Heart right ventricle (tissue), 16 donors: ENCODE measurements at regions of chr12 and their contacts with region 1.

Region 1: GRCh38 chr12:19129486-19130223 is at the start of gene PLEKHA5:
- DNase-seq: peak; percentile 68 to 82
- ATAC-seq: peak; percentile 73 to 94 (median 90)
- H3K4me3 ChIP-seq: peak within 1 kb of the TSS; percentile 82 to 98 (median 93)
- H3K27ac ChIP-seq: peak within 1 kb of the TSS; percentile 86 to 97 (median 94)
- H3K4me1 ChIP-seq: peaks cover 0 to 21% (median 6%) of the 10 kb centered on the region in 9 donors
- H3K27me3 ChIP-seq: no peaks in the 10 kb centered on the region
- CTCF ChIP-seq: peak in 6 of 9 donors; percentile 13 to 52 (median 32)
- total RNA-seq, gene PLEKHA5: 38.8 to 77.1 (median 65.7) TPM

Region 2: DNA sequence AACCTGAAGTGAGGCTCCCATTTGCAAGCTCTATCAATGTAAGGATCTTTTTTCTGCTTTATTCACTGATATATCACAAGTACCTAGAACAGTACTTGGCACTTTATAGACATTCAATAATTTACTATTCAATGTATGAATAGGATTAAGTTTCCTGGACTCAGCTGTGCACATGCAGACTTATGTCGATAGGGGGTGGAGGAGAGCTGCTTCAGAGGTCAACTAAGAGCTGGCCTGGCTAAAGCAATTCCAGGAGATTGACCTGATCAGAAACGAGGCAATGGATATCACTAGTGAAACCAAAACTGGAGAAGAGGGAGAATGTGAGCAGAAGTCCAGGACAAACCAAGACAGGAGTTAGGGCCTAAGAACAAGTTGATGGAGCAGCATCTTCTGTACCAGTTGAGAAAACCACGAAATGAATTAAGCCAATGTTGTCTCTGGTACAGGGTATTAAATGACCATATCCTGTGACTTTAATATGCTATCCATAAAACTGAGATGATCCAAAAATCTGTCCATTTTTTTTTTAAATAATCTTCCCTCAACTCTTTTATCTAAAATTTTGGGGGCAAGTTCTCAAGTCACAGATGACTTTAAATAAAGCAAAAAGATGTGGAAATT is 699.1 kb before region 1 on chr12:
- intact Hi-C with region 1: loop called in 1 of 10 experiments (anchors 10 kb)
- DNase-seq: peak in 1 of 2 donors; percentile 37
- ATAC-seq: peak; percentile 73 to 94 (median 88)
- H3K4me3 ChIP-seq: no peak overlapping the region
- H3K27ac ChIP-seq: no peak overlapping the region
- H3K4me1 ChIP-seq: peaks cover 0 to 25% (median 0%) of the 10 kb centered on the region in 9 donors
- H3K27me3 ChIP-seq: no peaks in the 10 kb centered on the region
- CTCF ChIP-seq: peak; percentile 42 to 89 (median 80)

Region 3: DNA sequence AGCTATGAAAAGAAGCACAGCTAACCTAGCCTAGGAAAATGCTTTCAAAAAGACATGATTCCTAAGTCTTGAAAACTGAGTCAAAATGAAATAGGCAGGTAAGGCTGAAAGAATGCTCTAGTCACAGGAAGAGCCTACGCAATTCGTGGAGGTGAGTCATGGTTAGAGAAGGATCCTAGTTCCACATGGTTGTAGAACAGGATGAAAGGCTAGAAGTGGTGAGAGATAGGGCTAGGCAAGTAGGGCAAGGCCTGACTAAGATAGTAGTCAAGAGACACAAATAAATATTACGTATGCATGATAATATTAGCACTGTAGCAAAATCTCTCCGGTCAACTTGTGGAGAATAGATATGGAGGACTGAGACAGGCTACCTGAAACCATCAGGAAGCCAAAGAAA is 439.0 kb before region 1 on chr12:
- intact Hi-C with region 1: no loop called
- DNase-seq: no peak
- ATAC-seq: peak; percentile 46 to 98 (median 90)
- H3K4me3 ChIP-seq: no peak overlapping the region
- H3K27ac ChIP-seq: peak overlapping the region in 2 of 10 donors; percentile 37 to 49
- H3K4me1 ChIP-seq: peaks cover 0 to 9% (median 0%) of the 10 kb centered on the region in 9 donors
- H3K27me3 ChIP-seq: no peaks in the 10 kb centered on the region
- CTCF ChIP-seq: no peak

Region 4: DNA sequence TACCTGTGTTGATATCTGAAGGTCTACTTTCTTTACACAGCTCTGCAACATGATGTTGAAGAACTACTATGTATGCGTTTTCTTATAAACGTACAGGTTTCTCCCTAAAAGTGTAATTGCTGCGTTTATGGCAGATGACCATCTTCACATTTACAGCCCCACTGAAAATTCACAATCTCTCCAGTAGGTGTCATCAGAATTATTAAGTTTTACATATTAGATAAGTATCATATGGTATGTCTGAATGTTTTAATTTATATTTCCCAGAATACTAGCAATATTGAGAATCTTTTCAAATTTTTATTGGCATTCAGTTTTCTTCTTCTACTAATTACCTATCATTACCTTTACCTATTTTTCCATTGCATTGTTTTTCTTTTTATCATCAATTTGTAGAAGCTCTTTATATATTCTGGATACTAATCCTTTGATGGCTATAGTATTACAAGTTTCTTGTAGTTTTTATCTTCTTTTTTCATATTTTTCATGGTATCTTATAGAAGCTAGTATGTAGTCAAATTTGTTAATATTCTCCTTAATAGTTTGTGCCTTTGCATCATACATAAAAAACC is 268.3 kb before region 1 on chr12:
- intact Hi-C with region 1: loop called in 1 of 10 experiments (anchors 5 kb)
- DNase-seq: no peak
- ATAC-seq: no peak
- H3K4me3 ChIP-seq: no peak overlapping the region
- H3K27ac ChIP-seq: no peak overlapping the region
- H3K4me1 ChIP-seq: peaks cover 0 to 10% (median 0%) of the 10 kb centered on the region in 9 donors
- H3K27me3 ChIP-seq: no peaks in the 10 kb centered on the region
- CTCF ChIP-seq: peak in 8 of 9 donors; percentile 19 to 61 (median 50)

Region 5: GRCh38 chr12:18919871-18920511 is 209.7 kb before region 1 on chr12:
- intact Hi-C with region 1: no loop called
- DNase-seq: no peak
- ATAC-seq: no peak
- H3K4me3 ChIP-seq: no peak overlapping the region
- H3K27ac ChIP-seq: no peak overlapping the region
- H3K4me1 ChIP-seq: no peaks in the 10 kb centered on the region
- H3K27me3 ChIP-seq: no peaks in the 10 kb centered on the region
- CTCF ChIP-seq: no peak

Region 6: GRCh38 chr12:19031032-19031431 is 98.6 kb before region 1 on chr12:
- intact Hi-C with region 1: loop called in 2 of 10 experiments (anchors 5 kb)
- DNase-seq: no peak
- ATAC-seq: peak in 5 of 8 donors; percentile 30 to 59 (median 50)
- H3K4me3 ChIP-seq: no peak overlapping the region
- H3K27ac ChIP-seq: no peak overlapping the region
- H3K4me1 ChIP-seq: peaks cover 0 to 14% (median 4%) of the 10 kb centered on the region in 9 donors
- H3K27me3 ChIP-seq: no peaks in the 10 kb centered on the region
- CTCF ChIP-seq: no peak

Region 7: DNA sequence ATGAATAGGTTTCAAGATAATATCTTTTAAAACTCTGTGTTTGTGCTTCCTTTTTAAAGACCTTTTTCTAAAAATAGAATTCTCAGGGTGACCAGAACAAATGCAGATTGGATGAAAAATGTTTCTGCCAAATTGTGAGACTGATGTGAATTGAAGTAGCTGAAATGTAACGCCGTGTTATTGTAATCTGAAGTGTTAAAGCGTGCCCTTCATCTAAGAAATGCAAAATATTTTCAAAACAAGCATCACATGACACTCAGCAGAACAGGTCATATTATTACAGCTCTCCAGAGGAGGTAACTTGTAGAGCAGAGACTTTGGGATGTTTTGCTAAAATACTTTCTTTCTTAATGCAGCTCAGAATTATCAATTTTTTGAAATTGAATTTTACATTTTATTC is 90.1 kb before region 1 on chr12:
- intact Hi-C with region 1: loop called in 5 of 10 experiments (anchors 2 to 10 kb)
- DNase-seq: no peak
- ATAC-seq: peak in 4 of 8 donors; percentile 36 to 70 (median 48)
- H3K4me3 ChIP-seq: peak overlapping the region in 8 of 10 donors; percentile 15 to 41 (median 26)
- H3K27ac ChIP-seq: peak overlapping the region; percentile 13 to 83 (median 73)
- H3K4me1 ChIP-seq: peaks cover 0 to 51% (median 28%) of the 10 kb centered on the region in 9 donors
- H3K27me3 ChIP-seq: no peaks in the 10 kb centered on the region
- CTCF ChIP-seq: no peak

Region 8: DNA sequence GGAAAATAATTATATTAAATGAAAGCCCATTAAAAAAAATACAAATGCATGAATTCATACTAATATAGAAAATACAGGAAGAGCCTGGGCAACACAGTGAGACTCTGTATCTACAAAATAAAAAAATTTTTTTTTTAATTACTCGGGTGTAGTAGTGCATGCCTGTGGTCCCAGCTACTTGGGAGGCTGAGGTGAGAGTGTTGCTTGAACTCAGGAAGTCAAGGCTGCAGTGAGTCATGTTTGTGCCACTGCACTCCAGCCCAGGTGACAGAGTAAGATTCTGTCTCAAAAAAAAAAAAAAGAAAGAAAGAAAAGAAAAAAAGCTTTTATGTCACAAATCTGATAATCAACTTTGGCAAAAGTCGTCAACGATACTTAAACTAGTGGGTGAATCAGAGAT is 80.7 kb before region 1 on chr12:
- intact Hi-C with region 1: loop called in 2 of 10 experiments (anchors 5 to 10 kb)
- DNase-seq: no peak
- ATAC-seq: no peak
- H3K4me3 ChIP-seq: no peak overlapping the region
- H3K27ac ChIP-seq: no peak overlapping the region
- H3K4me1 ChIP-seq: no peaks in the 10 kb centered on the region
- H3K27me3 ChIP-seq: no peaks in the 10 kb centered on the region
- CTCF ChIP-seq: no peak

Region 9: GRCh38 chr12:19181666-19182426 is 52.2 kb after region 1 on chr12:
- intact Hi-C with region 1: loop called in 4 of 10 experiments (anchors 5 kb)
- DNase-seq: no peak
- ATAC-seq: no peak
- H3K4me3 ChIP-seq: no peak overlapping the region
- H3K27ac ChIP-seq: peak overlapping the region in 6 of 10 donors; percentile 4 to 57 (median 34)
- H3K4me1 ChIP-seq: peaks cover 2 to 64% (median 28%) of the 10 kb centered on the region in 9 donors
- H3K27me3 ChIP-seq: no peaks in the 10 kb centered on the region
- CTCF ChIP-seq: peak in 5 of 9 donors; percentile 13 to 34 (median 25)

Region 10: GRCh38 chr12:19323805-19324204 is 194.2 kb after region 1 on chr12:
- intact Hi-C with region 1: no loop called
- DNase-seq: no peak
- ATAC-seq: no peak
- H3K4me3 ChIP-seq: no peak overlapping the region
- H3K27ac ChIP-seq: no peak overlapping the region
- H3K4me1 ChIP-seq: peaks cover 0 to 12% (median 4%) of the 10 kb centered on the region in 9 donors
- H3K27me3 ChIP-seq: no peaks in the 10 kb centered on the region
- CTCF ChIP-seq: no peak